ENCODE measurements at regions of chr6 and their contacts with region 1.

Region 1: DNA sequence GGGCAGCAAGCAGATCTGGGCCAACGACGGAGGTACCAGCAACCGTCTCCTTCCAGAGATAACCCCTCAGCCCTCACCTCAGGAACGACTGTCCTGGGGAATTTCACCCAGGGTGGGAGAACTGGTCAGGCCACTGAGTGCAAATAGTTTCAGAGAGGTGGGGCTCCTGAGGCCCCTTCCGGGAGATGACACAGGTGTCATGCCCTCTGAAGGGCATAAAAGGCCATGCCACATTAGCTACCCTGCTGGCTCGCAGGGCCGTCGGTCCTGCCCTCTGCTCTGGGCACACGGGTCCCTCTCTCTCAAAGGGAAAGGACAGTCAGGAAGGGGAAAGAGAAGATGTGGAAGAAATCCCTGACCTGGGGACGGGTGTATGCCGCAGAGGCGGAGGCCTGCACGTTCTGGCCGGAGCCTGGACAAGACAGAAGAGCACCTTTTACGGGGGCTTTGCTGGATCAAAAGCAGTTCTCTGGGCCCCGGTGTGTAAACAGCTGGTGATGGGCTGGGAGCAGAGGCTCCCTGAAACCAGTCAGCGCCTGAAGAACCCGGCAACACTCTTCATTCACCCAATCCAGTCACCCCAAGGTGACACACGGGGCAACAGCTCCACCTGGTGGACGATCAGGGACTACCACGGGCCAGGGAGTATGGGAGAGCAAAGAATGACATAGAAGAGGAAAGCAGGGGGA is 6.4 kb upstream of the TAF8 start:
- DNase-seq: peak; percentile 96
- H3K4me3 Mint-ChIP-seq: peak overlapping the region; percentile 68
- H3K27ac Mint-ChIP-seq: peak overlapping the region; percentile 96
- H3K4me1 Mint-ChIP-seq: peaks cover 84% of the 10 kb centered on the region
- H3K27me3 Mint-ChIP-seq: no peaks in the 10 kb centered on the region

Region 2: GRCh38 chr6:41463062-41463930 is 580.6 kb before region 1 on chr6:
- CTCF ChIA-PET with region 1: no interaction called
- POLR2A ChIA-PET with region 1: no interaction called
- intact Hi-C with region 1: no loop called
- DNase-seq: peak; percentile 51
- H3K4me3 Mint-ChIP-seq: no peak overlapping the region
- H3K27ac Mint-ChIP-seq: no peak overlapping the region
- H3K4me1 Mint-ChIP-seq: no peaks in the 10 kb centered on the region
- H3K27me3 Mint-ChIP-seq: peaks cover 28% of the 10 kb centered on the region

Region 3: DNA sequence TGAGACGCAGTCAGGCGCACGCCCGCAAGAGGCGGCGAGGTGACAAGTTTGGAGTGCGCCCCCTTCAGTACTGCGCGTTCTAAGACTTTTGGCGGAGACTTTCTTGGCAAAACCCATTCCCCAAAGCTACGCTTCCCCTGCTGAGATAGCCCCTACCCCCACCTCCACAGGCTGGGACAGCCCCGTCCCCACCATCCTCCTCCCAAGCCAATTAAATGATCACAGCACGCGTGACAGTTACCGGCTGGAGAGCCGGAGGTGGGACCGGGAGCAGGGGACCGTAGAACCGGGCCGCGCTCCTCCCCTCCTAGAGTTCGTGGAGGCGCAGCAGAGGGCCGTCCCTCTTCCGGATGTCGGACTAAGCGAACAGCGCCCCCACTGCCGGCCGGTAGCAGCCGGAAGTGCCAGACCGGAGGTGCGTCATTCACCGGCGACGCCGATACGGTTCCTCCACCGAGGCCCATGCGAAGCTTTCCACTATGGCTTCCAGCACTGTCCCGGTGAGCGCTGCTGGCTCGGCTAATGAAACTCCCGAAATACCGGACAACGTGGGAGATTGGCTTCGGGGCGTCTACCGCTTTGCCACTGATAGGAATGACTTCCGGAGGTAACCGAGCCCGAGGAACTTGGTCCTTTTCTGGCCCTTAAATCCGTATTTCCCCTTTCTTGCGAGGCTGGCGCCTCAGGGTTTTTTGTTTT is 256.6 kb before region 1 on chr6 and contains the start of gene TOMM6:
- CTCF ChIA-PET with region 1: interaction called, 94 read pairs
- POLR2A ChIA-PET with region 1: interaction called, 3 read pairs
- intact Hi-C with region 1: loop called (anchors 1 kb)
- DNase-seq: peak; percentile 98
- H3K4me3 Mint-ChIP-seq: peak within 1 kb of the TSS; percentile 92
- H3K27ac Mint-ChIP-seq: peak within 1 kb of the TSS; percentile 90
- H3K4me1 Mint-ChIP-seq: peaks cover 20% of the 10 kb centered on the region
- H3K27me3 Mint-ChIP-seq: no peaks in the 10 kb centered on the region
- total RNA-seq, gene TOMM6: 264 to 280 TPM

Region 4: GRCh38 chr6:41895300-41896233 is 148.4 kb before region 1 on chr6 and contains the start of gene USP49:
- CTCF ChIA-PET with region 1: interaction called, 190 read pairs
- POLR2A ChIA-PET with region 1: interaction called, 11 read pairs
- intact Hi-C with region 1: loop called (anchors 1 kb)
- DNase-seq: peak; percentile 94
- H3K4me3 Mint-ChIP-seq: no peak within 1 kb of the TSS
- H3K27ac Mint-ChIP-seq: peak within 1 kb of the TSS; percentile 89
- H3K4me1 Mint-ChIP-seq: peaks cover 9% of the 10 kb centered on the region
- H3K27me3 Mint-ChIP-seq: no peaks in the 10 kb centered on the region
- total RNA-seq, gene USP49: 6.1 to 6.3 TPM

Region 5: DNA sequence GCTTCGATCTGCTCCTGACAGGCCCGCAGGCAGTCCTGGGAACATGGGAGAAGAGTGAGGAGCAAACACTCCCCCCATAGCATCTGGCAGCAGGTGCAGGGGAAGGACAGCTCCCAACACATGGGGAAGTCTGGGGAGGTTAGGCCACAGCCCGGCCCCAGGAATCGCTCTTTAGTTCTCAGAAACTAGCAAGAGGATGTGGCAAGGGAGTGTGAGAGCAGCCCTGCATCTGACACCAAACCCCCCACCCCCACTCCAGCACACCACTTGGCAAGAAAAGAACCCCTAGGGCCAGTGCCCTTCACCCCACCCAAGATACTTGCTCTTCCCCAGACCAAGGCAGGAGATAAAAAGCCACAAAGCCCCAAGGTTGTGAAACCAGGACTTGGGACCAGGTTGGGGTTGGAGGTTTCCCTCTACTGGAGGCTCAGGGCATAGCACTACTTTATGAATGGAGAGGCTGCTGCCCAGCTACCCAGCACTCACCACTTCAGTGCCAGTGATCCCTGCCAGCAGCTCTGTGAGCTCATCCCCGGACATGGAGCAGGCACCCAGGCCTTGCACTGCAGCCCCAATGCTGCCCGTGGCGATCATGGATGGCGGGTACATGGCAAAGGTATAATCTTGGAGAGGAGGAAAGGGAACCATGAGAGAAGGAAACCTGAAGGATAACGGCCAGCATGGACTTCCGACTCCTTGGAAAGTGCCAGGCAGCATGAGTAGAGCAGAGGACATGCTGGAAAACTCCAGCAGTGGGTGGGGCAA is 107.7 kb before region 1 on chr6:
- CTCF ChIA-PET with region 1: interaction called, 470 read pairs
- POLR2A ChIA-PET with region 1: interaction called, 177 read pairs
- intact Hi-C with region 1: loop called (anchors 1 kb)
- DNase-seq: peak; percentile 87
- H3K4me3 Mint-ChIP-seq: peak overlapping the region; percentile 99
- H3K27ac Mint-ChIP-seq: peak overlapping the region; percentile 90
- H3K4me1 Mint-ChIP-seq: peaks cover 53% of the 10 kb centered on the region
- H3K27me3 Mint-ChIP-seq: no peaks in the 10 kb centered on the region

Region 6: GRCh38 chr6:41970436-41970846 is 73.5 kb before region 1 on chr6:
- CTCF ChIA-PET with region 1: interaction called, 23 read pairs
- POLR2A ChIA-PET with region 1: no interaction called
- intact Hi-C with region 1: no loop called
- DNase-seq: peak; percentile 82
- H3K4me3 Mint-ChIP-seq: peak overlapping the region; percentile 57
- H3K27ac Mint-ChIP-seq: peak overlapping the region; percentile 99
- H3K4me1 Mint-ChIP-seq: peaks cover 81% of the 10 kb centered on the region
- H3K27me3 Mint-ChIP-seq: no peaks in the 10 kb centered on the region

Region 7: GRCh38 chr6:42563697-42564505 is 520.0 kb after region 1 on chr6 and contains the start of gene UBR2:
- CTCF ChIA-PET with region 1: no interaction called
- POLR2A ChIA-PET with region 1: no interaction called
- intact Hi-C with region 1: loop called (anchors 5 kb)
- DNase-seq: peak; percentile 96
- H3K4me3 Mint-ChIP-seq: peak within 1 kb of the TSS; percentile 83
- H3K27ac Mint-ChIP-seq: peak within 1 kb of the TSS; percentile 91
- H3K4me1 Mint-ChIP-seq: peaks cover 25% of the 10 kb centered on the region
- H3K27me3 Mint-ChIP-seq: no peaks in the 10 kb centered on the region
- total RNA-seq, gene UBR2: 31.4 to 32.5 TPM

Measured in activated CD4-positive, alpha-beta memory T cell treated with anti-CD3 and anti-CD28 coated beads for 36 hours (primary cell).